Naive thymus-derived CD4-positive, alpha-beta T cell (primary cell): ENCODE measurements at regions of chr10 and their contacts with region 1.

Region 1: DNA sequence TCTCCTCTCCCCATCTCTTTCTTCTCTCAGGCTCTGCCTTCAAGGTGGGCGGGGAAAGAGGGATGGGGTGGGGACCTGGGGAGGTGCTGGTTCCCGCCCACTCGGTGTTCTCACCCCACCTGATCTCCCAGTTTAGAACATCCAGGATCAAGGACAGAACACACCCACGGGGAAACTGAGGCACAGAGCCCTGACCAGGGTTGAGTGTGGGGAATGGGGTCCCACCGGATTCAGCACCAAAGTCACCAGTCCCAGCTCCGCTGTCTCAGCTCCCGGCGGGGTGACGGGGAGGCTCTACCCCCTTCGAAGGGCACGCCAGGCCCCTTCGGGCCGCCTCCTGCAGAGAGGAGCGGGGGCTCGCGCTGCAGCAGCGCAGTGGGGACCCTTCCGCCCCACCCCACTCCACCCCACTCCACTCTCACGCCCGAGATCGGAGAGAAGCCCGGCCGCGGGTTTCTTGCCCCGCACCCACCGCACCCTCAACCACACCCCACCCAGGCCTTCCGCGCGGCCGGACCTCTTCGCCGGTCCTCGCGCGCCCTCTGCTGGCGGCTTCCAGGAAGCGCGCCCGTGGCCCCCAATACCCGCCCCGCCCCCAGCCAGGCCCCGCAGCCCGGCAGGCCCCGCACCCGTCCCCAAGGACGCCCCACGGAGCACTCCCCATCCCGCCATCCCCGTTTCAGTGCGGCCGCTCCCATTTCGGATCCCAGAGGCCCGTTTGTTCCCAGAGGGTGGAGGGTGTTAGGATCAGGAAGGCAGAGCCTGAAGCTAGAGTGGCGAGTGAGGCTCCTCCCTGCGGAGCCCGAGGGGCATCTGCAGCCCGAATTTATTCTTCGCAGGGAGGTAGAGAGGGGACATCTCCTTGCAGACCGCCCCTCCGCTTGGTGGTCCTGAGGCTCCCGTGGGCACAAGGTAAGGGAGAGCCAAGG is 18.0 kb downstream of the POLL start:
- DNase-seq: peak; percentile 62 to 88 (median 77)
- ATAC-seq: peak; percentile 95
- H3K4me3 ChIP-seq: peak overlapping the region; percentile 69
- H3K4me3 Mint-ChIP-seq: peak overlapping the region; percentile 50 to 80 (median 74)
- H3K27ac ChIP-seq: no peak overlapping the region
- H3K27ac Mint-ChIP-seq: peak overlapping the region in 1 of 9 donors; percentile 43
- H3K4me1 ChIP-seq: peaks cover 4 to 17% of the 10 kb centered on the region in 2 donors
- H3K4me1 Mint-ChIP-seq: peaks cover 0 to 21% (median 13%) of the 10 kb centered on the region in 7 donors
- H3K27me3 ChIP-seq: peaks cover 0 to 10% of the 10 kb centered on the region in 2 donors
- H3K27me3 Mint-ChIP-seq: peaks cover 31 to 47% (median 45%) of the 10 kb centered on the region in 5 donors

Region 2: GRCh38 chr10:101161494-101162299 is 408.4 kb before region 1 on chr10:
- CTCF ChIA-PET with region 1: no interaction called
- POLR2A ChIA-PET with region 1: no interaction called
- intact Hi-C with region 1: loop called (anchors 1 kb)
- DNase-seq: peak; percentile 45 to 71 (median 65)
- ATAC-seq: peak; percentile 96
- H3K4me3 ChIP-seq: no peak overlapping the region
- H3K4me3 Mint-ChIP-seq: peak overlapping the region in 5 of 10 donors; percentile 20 to 51 (median 30)
- H3K27ac ChIP-seq: no peak overlapping the region
- H3K27ac Mint-ChIP-seq: peak overlapping the region in 1 of 9 donors; percentile 26
- H3K4me1 ChIP-seq: no peaks in the 10 kb centered on the region
- H3K4me1 Mint-ChIP-seq: peaks cover 9 to 16% (median 12%) of the 10 kb centered on the region in 7 donors
- H3K27me3 ChIP-seq: peaks cover 6 to 15% of the 10 kb centered on the region in 2 donors
- H3K27me3 Mint-ChIP-seq: peaks cover 49 to 78% (median 70%) of the 10 kb centered on the region in 5 donors

Region 3: DNA sequence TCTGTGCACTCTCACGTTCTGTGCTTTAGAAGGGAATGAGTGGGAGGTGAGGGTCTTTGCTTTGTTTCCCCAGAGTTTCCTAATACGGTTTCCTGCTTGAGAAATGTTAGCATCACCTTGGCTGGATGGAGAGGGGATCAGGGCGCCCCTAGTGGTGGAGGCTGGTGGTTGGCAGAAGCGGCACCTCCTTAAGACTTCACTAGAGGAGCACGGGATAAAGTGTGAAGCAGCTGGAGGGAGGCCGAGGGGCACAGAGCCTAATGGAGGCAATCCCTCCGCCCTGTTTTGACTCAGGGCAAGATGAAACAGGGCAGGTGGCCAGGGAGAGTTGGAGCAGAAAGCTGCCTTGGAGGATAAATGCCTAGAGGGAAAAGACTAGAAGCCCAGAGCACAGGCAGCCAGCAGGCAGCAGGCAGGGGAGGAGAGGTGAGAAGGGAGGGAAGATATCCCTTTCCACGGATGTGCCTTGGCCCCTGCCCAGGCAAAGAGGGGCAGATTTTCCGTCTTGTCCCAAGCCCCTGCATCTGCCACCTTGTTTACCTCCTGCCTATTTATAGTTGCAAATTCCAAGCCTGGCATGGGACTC is 272.1 kb before region 1 on chr10:
- CTCF ChIA-PET with region 1: no interaction called
- POLR2A ChIA-PET with region 1: no interaction called
- intact Hi-C with region 1: loop called in 1 of 2 experiments (anchors 2 kb)
- DNase-seq: peak; percentile 24 to 77 (median 64)
- ATAC-seq: peak; percentile 71
- H3K4me3 ChIP-seq: no peak overlapping the region
- H3K4me3 Mint-ChIP-seq: no peak overlapping the region
- H3K27ac ChIP-seq: no peak overlapping the region
- H3K27ac Mint-ChIP-seq: peak overlapping the region in 1 of 9 donors; percentile 17
- H3K4me1 ChIP-seq: no peaks in the 10 kb centered on the region
- H3K4me1 Mint-ChIP-seq: peaks cover 0 to 6% (median 4%) of the 10 kb centered on the region in 7 donors
- H3K27me3 ChIP-seq: peaks cover 7 to 8% of the 10 kb centered on the region in 2 donors
- H3K27me3 Mint-ChIP-seq: peaks cover 44 to 75% (median 69%) of the 10 kb centered on the region in 5 donors

Region 4: GRCh38 chr10:101536800-101537199 is 33.3 kb before region 1 on chr10:
- CTCF ChIA-PET with region 1: interaction called, 3 read pairs
- POLR2A ChIA-PET with region 1: interaction called, 3 read pairs
- intact Hi-C with region 1: loop called (anchors 1 kb)
- DNase-seq: peak in 5 of 9 donors; percentile 14 to 32 (median 18)
- ATAC-seq: peak; percentile 54
- H3K4me3 ChIP-seq: no peak overlapping the region
- H3K4me3 Mint-ChIP-seq: no peak overlapping the region
- H3K27ac ChIP-seq: no peak overlapping the region
- H3K27ac Mint-ChIP-seq: no peak overlapping the region
- H3K4me1 ChIP-seq: no peaks in the 10 kb centered on the region
- H3K4me1 Mint-ChIP-seq: no peaks in the 10 kb centered on the region
- H3K27me3 ChIP-seq: no peaks in the 10 kb centered on the region
- H3K27me3 Mint-ChIP-seq: no peaks in the 10 kb centered on the region

Region 5: GRCh38 chr10:101587725-101588653 is 17.9 kb after region 1 on chr10 and contains the starts of genes DPCD and POLL:
- CTCF ChIA-PET with region 1: interaction called, 3 read pairs
- POLR2A ChIA-PET with region 1: no interaction called
- intact Hi-C with region 1: loop called in 1 of 2 experiments (anchors 1 kb)
- DNase-seq: peak; percentile 73 to 89 (median 81)
- ATAC-seq: peak; percentile 94
- H3K4me3 ChIP-seq: peak within 1 kb of the TSS; percentile 77
- H3K4me3 Mint-ChIP-seq: peak within 1 kb of the TSS; percentile 92 to 97 (median 95)
- H3K27ac ChIP-seq: peak within 1 kb of the TSS; percentile 69
- H3K27ac Mint-ChIP-seq: peak within 1 kb of the TSS; percentile 71 to 94 (median 89)
- H3K4me1 ChIP-seq: peaks cover 14 to 16% of the 10 kb centered on the region in 2 donors
- H3K4me1 Mint-ChIP-seq: peaks cover 16 to 37% (median 32%) of the 10 kb centered on the region in 7 donors
- H3K27me3 ChIP-seq: no peaks in the 10 kb centered on the region
- H3K27me3 Mint-ChIP-seq: no peaks in the 10 kb centered on the region
- total RNA-seq, gene DPCD: 0.64 to 3.6 (median 1.3) TPM
- total RNA-seq, gene POLL: 34.9 to 65.8 (median 38.8) TPM

Region 6: GRCh38 chr10:101736666-101737065 is 166.6 kb after region 1 on chr10:
- CTCF ChIA-PET with region 1: no interaction called
- POLR2A ChIA-PET with region 1: no interaction called
- intact Hi-C with region 1: no loop called
- DNase-seq: no peak
- ATAC-seq: no peak
- H3K4me3 ChIP-seq: no peak overlapping the region
- H3K4me3 Mint-ChIP-seq: no peak overlapping the region
- H3K27ac ChIP-seq: no peak overlapping the region
- H3K27ac Mint-ChIP-seq: peak overlapping the region in 1 of 9 donors; percentile 36
- H3K4me1 ChIP-seq: no peaks in the 10 kb centered on the region
- H3K4me1 Mint-ChIP-seq: peaks cover 0 to 1% (median 0%) of the 10 kb centered on the region in 7 donors
- H3K27me3 ChIP-seq: no peaks in the 10 kb centered on the region
- H3K27me3 Mint-ChIP-seq: peaks cover 0 to 43% (median 4%) of the 10 kb centered on the region in 5 donors